HCT116 (cell line): ENCODE measurements at regions of chr6 and their contacts with region 1.

Region 1: GRCh38 chr6:11575408-11576033 is 38.0 kb downstream of the TMEM170B start:
- DNase-seq: peak; percentile 71
- ATAC-seq: peak; percentile 100
- H3K4me3 ChIP-seq: no peak overlapping the region
- H3K27ac ChIP-seq: no peak overlapping the region
- H3K4me1 ChIP-seq: no peaks in the 10 kb centered on the region
- H3K27me3 ChIP-seq: no peaks in the 10 kb centered on the region
- CTCF ChIP-seq: peak; percentile 67 to 92 (median 89); a peak in 5 of 6 replicates
- POLR2A ChIP-seq: no peak
- RAD21 ChIP-seq: peak; percentile 89

Region 2: DNA sequence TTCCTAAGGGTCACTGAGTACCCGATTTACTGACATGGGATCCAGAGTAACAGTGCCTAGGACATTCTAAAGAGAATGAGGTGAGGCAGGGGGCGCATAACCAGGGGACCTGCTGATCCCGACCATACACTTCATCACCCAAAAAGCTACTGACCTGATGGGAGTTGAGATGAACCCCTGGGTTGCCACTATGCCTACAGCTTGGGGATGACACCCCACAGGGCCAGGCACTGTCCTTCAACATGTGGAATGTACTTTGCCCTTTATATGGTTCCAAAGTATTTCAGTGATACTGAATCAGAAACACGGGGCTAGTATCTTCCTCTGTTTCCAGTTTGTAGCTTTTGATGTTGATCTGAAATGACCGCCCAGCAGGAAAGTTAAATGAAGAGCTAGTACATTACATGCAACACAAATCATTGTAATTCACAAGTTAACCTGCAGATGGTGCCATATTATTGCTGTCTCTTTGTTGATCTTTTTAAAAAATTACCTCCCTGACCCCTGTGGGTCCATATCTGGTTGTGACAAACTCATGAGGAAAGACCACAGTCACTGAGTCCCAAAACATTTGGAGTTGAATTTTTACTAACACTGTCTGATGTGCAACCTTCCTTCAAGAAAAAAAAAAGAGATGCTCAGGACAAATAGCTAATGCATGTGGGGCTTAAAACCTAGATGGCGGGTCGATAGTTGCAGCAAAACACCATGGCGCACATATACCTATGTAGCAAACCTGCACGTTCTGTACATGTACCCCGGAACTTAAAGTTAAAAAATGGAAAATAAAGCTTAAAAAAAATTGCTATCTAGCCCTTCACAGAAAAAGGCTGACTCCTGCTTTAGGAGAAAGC is 1097.1 kb before region 1 on chr6:
- CTCF ChIA-PET with region 1: interaction called, 17 read pairs
- POLR2A ChIA-PET with region 1: no interaction called
- RAD21 ChIA-PET with region 1: no interaction called
- intact Hi-C with region 1: loop called (anchors 5 kb)
- DNase-seq: peak; percentile 41
- ATAC-seq: peak; percentile 79
- H3K4me3 ChIP-seq: no peak overlapping the region
- H3K27ac ChIP-seq: no peak overlapping the region
- H3K4me1 ChIP-seq: peaks cover 0 to 10% of the 10 kb centered on the region in 2 experiments; a peak in 2 of 4 replicates
- H3K27me3 ChIP-seq: no peaks in the 10 kb centered on the region
- CTCF ChIP-seq: peak; percentile 46 to 79 (median 56); a peak in 4 of 6 replicates
- POLR2A ChIP-seq: no peak
- RAD21 ChIP-seq: peak; percentile 85

Region 3: GRCh38 chr6:10954590-10955010 is 620.9 kb before region 1 on chr6:
- CTCF ChIA-PET with region 1: interaction called, 11 read pairs
- POLR2A ChIA-PET with region 1: no interaction called
- RAD21 ChIA-PET with region 1: no interaction called
- intact Hi-C with region 1: loop called (anchors 5 kb)
- DNase-seq: peak; percentile 54
- ATAC-seq: peak; percentile 95
- H3K4me3 ChIP-seq: no peak overlapping the region
- H3K27ac ChIP-seq: no peak overlapping the region
- H3K4me1 ChIP-seq: no peaks in the 10 kb centered on the region
- H3K27me3 ChIP-seq: no peaks in the 10 kb centered on the region
- CTCF ChIP-seq: peak; percentile 68 to 94 (median 92)
- POLR2A ChIP-seq: no peak
- RAD21 ChIP-seq: peak; percentile 65

Region 4: DNA sequence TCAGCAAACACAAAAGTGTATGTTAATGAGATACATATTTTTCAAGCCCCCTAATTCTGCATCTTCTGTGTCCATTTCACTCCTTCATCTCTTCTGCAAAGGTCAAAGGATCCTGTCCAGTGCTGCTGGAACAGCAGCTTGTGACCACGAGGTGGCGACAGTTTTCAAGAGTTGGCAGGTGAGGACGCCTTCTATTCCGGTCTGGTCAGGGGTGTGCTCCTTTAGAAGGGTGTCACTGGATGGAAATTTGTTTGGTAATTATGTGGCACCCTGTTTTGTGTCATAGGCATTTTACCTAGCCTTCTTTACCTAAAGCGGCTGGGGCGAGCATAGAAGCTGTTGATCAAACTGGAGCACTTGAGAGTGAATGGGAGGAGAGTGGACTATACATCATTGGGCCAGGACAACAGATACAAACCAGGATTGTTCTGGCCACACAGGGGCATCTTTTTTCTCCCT is 431.1 kb before region 1 on chr6:
- CTCF ChIA-PET with region 1: interaction called, 5 read pairs
- POLR2A ChIA-PET with region 1: no interaction called
- RAD21 ChIA-PET with region 1: no interaction called
- intact Hi-C with region 1: loop called (anchors 1 kb)
- DNase-seq: peak; percentile 61
- ATAC-seq: peak; percentile 94
- H3K4me3 ChIP-seq: no peak overlapping the region
- H3K27ac ChIP-seq: no peak overlapping the region
- H3K4me1 ChIP-seq: peaks cover 7 to 22% of the 10 kb centered on the region in 2 experiments; a peak in 3 of 4 replicates
- H3K27me3 ChIP-seq: no peaks in the 10 kb centered on the region
- CTCF ChIP-seq: peak; percentile 88 to 96 (median 94)
- POLR2A ChIP-seq: no peak
- RAD21 ChIP-seq: peak; percentile 93

Region 5: GRCh38 chr6:11172501-11173332 is 402.8 kb before region 1 on chr6:
- CTCF ChIA-PET with region 1: interaction called, 3 read pairs
- POLR2A ChIA-PET with region 1: no interaction called
- RAD21 ChIA-PET with region 1: no interaction called
- intact Hi-C with region 1: loop called (anchors 10 kb)
- DNase-seq: peak; percentile 23
- ATAC-seq: peak; percentile 92
- H3K4me3 ChIP-seq: no peak overlapping the region
- H3K27ac ChIP-seq: no peak overlapping the region
- H3K4me1 ChIP-seq: no peaks in the 10 kb centered on the region
- H3K27me3 ChIP-seq: no peaks in the 10 kb centered on the region
- CTCF ChIP-seq: peak; percentile 78 to 92 (median 80)
- POLR2A ChIP-seq: no peak
- RAD21 ChIP-seq: peak; percentile 70

Region 6: DNA sequence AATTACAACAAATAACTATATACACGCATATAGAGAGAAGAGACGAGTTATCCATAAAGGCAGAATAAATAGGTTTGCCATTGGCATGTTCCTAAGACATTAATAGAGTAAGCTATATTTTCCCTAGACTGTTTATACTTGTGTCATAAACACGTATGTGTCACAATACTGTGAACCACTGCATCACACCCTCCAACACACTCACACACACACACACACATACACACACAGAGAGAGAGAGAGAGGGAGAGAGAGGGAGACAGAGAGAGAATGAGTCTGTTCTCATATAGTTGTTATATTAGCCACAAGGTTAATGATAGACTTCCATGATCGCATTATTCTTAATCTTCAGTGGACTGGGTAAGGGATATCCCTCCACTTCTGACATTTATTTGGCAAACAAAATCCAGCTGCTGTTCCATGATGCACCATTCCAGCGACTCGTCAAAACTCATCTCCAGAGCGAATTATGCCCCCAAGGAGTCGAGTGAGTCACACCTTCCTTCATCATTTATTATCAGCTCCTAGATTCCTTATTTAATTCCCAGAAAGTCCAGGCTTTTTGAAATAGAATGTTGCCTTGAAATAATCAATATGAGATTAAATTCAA is 353.8 kb after region 1 on chr6:
- CTCF ChIA-PET with region 1: no interaction called
- POLR2A ChIA-PET with region 1: no interaction called
- RAD21 ChIA-PET with region 1: no interaction called
- intact Hi-C with region 1: no loop called
- DNase-seq: no peak
- ATAC-seq: no peak
- H3K4me3 ChIP-seq: no peak overlapping the region
- H3K27ac ChIP-seq: no peak overlapping the region
- H3K4me1 ChIP-seq: no peaks in the 10 kb centered on the region
- H3K27me3 ChIP-seq: no peaks in the 10 kb centered on the region
- CTCF ChIP-seq: no peak
- POLR2A ChIP-seq: no peak
- RAD21 ChIP-seq: no peak